ENCODE measurements at regions of chr12 and their contacts with region 1.

Region 1: DNA sequence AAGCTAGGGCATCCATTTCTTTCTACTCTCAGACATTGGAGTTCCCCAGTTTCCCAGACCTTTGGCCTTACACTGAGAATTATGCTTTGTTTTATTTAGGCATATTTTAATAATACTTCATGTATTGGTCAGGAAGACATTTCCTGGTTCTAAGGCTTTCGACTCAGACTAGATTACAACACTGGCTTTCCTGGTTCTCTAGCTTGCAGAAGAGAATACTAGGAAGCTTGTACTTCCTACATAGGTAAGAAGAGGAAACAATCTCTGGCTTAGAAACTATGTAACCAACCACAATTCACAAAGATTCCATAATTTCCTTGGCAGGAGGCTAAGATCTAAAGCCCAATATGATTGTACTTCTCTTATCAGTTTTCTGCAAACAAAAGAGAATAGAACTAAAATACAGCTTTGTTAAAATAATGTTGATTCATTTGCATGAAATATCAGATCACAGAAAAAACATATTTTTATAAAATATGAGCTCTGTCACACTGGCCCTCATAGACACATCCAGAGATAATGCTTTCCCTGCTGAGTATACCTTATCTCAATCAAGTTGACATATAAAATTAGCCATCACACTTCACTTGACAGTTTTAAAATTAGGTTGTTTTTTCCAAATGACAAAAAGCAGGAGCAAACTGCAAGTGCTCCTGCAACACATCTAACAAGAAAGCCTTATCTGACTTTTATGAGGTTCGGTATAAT is 30.5 kb downstream of the CLEC2D start:
- DNase-seq: no peak
- H3K4me3 ChIP-seq: no peak overlapping the region
- CTCF ChIP-seq: no peak

Region 2: GRCh38 chr12:9636851-9637206 is 63.2 kb before region 1 on chr12:
- in situ Hi-C with region 1: loop called (anchors 5 kb)
- DNase-seq: no peak
- H3K4me3 ChIP-seq: no peak overlapping the region
- CTCF ChIP-seq: no peak

Region 3: GRCh38 chr12:9731797-9732196 is 31.7 kb after region 1 on chr12:
- in situ Hi-C with region 1: no loop called
- DNase-seq: no peak
- H3K4me3 ChIP-seq: no peak overlapping the region
- CTCF ChIP-seq: no peak

Region 4: GRCh38 chr12:9827209-9827888 is 127.3 kb after region 1 on chr12 and contains the start of gene KLRF1:
- in situ Hi-C with region 1: no loop called
- DNase-seq: no peak
- H3K4me3 ChIP-seq: no peak within 1 kb of the TSS
- CTCF ChIP-seq: no peak